Activated CD4-positive, alpha-beta memory T cell treated with anti-CD3 and anti-CD28 coated beads for 36 hours (primary cell): ENCODE measurements at regions of chr9 and their contacts with region 1.

Region 1: GRCh38 chr9:112793213-112793810 is 42.8 kb downstream of the SNX30 start:
- DNase-seq: peak; percentile 90
- H3K4me3 Mint-ChIP-seq: no peak overlapping the region
- H3K27ac Mint-ChIP-seq: no peak overlapping the region
- H3K4me1 Mint-ChIP-seq: peaks cover 9% of the 10 kb centered on the region
- H3K27me3 Mint-ChIP-seq: no peaks in the 10 kb centered on the region

Region 2: DNA sequence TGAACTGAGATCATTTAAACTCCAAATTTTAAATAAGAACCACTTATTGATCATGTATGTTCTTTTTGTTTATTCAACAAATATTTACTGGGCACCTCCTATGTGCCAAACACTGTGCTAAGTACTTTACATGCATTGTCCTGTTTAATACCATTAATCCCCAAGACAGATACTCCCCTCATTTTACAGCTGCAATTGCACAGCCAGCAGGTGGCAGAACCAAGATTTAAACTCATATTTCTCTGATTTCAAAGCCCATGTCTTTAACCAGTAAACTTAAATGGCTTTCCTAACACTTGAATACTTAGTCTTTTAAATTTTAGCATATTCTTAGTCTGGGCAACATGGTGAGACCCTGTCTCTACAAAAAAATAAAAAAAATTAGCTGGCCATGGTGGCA is 350.1 kb before region 1 on chr9:
- CTCF ChIA-PET with region 1: interaction called, 13 read pairs
- POLR2A ChIA-PET with region 1: no interaction called
- intact Hi-C with region 1: loop called (anchors 1 kb)
- DNase-seq: peak; percentile 18
- H3K4me3 Mint-ChIP-seq: no peak overlapping the region
- H3K27ac Mint-ChIP-seq: no peak overlapping the region
- H3K4me1 Mint-ChIP-seq: no peaks in the 10 kb centered on the region
- H3K27me3 Mint-ChIP-seq: no peaks in the 10 kb centered on the region

Region 3: GRCh38 chr9:112486221-112487007 is 306.9 kb before region 1 on chr9 and contains the start of gene KIAA1958:
- CTCF ChIA-PET with region 1: no interaction called
- POLR2A ChIA-PET with region 1: no interaction called
- intact Hi-C with region 1: loop called (anchors 1 kb)
- DNase-seq: peak; percentile 91
- H3K4me3 Mint-ChIP-seq: peak within 1 kb of the TSS; percentile 90
- H3K27ac Mint-ChIP-seq: peak within 1 kb of the TSS; percentile 81
- H3K4me1 Mint-ChIP-seq: peaks cover 22% of the 10 kb centered on the region
- H3K27me3 Mint-ChIP-seq: no peaks in the 10 kb centered on the region
- total RNA-seq, gene KIAA1958: 6.1 to 6.5 TPM

Region 4: DNA sequence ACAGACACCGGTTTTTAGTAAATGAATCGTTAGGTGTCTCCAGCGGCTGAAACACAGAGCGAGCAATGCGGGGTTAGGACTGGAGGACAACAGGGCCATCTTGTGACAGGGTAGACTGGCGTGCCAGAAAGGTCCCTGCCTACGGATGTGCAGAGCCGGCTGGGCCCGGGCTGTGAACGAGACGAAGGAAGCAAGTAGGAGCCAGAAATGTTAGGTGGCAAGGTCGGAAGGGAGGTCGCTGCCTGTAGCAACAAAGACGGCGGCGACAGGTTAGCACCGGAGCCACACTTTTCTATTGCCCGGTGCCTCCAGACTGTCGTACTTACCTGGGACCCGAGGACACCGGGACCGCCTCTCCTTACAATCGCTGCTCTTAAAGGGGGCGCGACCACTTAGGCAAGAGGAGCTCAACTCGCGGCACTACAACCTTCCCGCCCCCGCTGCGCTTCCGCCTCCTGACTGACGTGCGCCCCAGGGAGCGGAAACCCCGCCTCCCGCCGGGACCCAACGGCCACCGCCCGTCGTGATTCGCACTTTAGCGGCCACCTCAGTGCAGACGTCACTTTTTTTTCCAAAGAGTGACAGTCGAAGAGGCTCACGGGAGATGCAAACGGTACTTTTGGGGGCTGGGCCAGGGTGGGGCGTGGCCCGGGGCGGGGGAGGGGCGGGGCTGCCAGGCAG is 75.5 kb before region 1 on chr9 and contains the start of gene INIP:
- CTCF ChIA-PET with region 1: interaction called, 22 read pairs
- POLR2A ChIA-PET with region 1: interaction called, 3 read pairs
- intact Hi-C with region 1: loop called (anchors 1 kb)
- DNase-seq: peak; percentile 99
- H3K4me3 Mint-ChIP-seq: peak within 1 kb of the TSS; percentile 90
- H3K27ac Mint-ChIP-seq: peak within 1 kb of the TSS; percentile 93
- H3K4me1 Mint-ChIP-seq: peaks cover 35% of the 10 kb centered on the region
- H3K27me3 Mint-ChIP-seq: no peaks in the 10 kb centered on the region
- total RNA-seq, gene INIP: 35.1 to 37.8 TPM

Region 5: DNA sequence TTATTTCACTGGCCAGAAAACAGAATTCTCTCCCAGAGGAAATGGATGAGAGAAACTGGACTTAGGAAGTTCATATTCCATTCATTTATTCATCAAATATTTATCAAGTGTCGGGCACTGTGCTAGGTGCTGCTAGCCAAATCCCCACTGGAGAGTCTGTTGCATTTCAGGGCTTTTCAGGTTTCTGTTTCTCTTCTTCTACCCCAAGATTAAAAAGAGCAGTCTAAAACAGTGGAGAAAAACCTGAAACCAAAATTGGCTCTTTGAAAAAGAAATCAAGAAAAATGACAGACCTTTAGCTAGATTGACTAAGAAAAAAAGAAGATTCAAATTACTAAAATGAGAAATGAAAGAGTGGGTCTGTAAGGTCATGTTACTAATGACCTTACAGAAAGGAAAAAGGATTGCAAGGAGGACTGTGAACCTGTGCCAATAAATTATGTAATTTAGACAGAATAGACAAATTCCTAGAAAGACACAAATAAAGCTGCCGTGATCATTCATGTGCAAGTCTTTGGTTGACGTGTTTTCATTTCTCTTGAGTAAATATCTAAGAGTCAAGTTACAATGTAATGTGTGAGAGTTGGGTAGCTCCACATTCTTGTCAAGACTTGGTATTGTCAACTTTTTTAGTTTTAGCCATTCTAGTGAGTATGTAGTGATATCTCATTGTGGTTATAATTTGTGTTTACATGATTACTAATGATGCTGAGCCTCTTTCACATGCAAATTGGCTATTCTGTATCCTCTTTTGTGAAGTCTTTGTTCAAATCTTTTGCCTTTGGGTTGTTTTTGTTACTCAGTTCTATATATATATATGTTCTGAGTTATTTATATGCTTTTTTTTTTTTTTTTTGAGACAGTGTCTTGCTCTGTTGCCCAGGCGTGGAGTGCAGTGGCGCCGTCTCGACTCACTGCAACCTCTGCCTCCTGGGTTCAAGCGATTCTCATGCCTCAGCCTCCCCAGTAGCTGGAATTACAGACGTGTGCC is 19.0 kb before region 1 on chr9:
- CTCF ChIA-PET with region 1: interaction called, 13 read pairs
- POLR2A ChIA-PET with region 1: no interaction called
- intact Hi-C with region 1: no loop called
- DNase-seq: no peak
- H3K4me3 Mint-ChIP-seq: no peak overlapping the region
- H3K27ac Mint-ChIP-seq: no peak overlapping the region
- H3K4me1 Mint-ChIP-seq: peaks cover 39% of the 10 kb centered on the region
- H3K27me3 Mint-ChIP-seq: no peaks in the 10 kb centered on the region